Activated CD8-positive, alpha-beta memory T cell treated with anti-CD3 and anti-CD28 coated beads, Interleukin-2, amount 10 ng/mL, durations not matched to agents 7 days and 5 days (primary cell): ENCODE measurements at regions of chr12 and their contacts with region 1.

Region 1: DNA sequence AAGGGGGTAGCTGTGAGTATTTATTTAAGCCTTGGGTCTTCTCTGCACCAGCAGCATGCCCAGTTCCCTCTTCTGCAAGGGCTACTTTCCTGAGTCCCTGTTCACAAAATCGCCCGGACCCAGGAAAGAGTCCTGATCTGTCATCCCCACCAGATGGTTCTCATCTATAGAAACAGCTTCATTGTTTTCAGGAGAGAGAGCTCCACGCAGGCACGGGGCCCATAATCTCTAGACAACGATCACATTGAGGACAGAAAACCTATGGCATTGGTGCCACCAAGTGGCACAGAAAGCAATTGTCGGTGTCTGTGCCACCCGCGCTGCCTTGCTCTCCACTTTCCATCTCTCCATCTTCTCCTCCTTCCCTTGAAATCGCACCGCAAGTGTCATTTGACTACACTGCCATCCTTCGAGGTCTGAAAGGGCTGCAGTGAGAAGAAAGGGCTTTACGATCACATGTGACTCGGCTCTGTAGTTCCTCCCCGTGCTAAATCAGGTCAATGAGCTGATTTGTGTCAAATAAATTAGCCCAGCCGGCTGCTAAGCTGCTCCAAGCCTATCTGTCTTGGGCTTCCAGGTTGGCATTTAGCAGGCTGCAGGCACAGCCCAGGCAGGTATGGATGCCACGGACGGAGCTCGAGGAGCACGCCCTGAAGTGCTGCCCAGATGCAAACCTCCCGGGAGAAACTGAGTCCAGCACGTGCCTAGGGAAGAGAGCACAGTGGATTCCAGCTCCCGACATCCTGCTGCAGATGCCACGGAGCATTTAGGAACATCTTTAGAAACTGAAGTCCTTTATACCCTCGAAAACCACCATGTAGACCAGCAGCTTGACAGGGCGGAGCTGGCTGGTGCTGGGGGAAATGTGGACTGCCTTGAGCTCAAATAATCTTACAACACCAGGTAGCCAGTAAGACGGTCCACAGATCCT is 28.8 kb downstream of the SPRING1 start:
- DNase-seq: peak; percentile 62
- ATAC-seq: peak; percentile 88
- H3K4me3 Mint-ChIP-seq: peak overlapping the region; percentile 36
- H3K27ac Mint-ChIP-seq: no peak overlapping the region
- H3K4me1 Mint-ChIP-seq: peaks cover 7% of the 10 kb centered on the region
- H3K27me3 Mint-ChIP-seq: peaks cover 25% of the 10 kb centered on the region

Region 2: DNA sequence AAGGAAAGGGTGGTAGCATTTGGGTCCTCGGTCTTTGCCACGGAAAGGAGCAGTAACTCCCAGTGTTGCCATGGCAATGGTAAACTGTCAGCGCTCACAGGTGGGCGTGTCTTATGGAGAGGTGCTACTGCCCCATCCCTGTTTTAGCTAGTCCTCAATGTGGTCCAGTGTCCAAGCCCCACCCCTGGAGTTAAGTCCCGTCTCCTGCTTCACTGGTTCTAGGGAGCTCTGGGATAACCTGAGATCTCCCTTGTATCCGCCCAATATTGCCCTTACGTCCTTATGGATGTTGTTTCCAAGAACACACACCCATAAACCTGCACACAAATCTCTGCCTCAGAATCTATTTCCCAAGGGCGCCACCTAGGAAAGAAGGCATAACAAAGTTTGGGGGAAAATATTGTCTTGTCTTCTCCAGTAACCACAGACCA is 35.4 kb before region 1 on chr12:
- CTCF ChIA-PET with region 1: interaction called, 14 read pairs
- DNase-seq: peak; percentile 50
- ATAC-seq: peak; percentile 27
- H3K4me3 Mint-ChIP-seq: no peak overlapping the region
- H3K27ac Mint-ChIP-seq: peak overlapping the region; percentile 80
- H3K4me1 Mint-ChIP-seq: peaks cover 49% of the 10 kb centered on the region
- H3K27me3 Mint-ChIP-seq: peaks cover 2% of the 10 kb centered on the region

Region 3: DNA sequence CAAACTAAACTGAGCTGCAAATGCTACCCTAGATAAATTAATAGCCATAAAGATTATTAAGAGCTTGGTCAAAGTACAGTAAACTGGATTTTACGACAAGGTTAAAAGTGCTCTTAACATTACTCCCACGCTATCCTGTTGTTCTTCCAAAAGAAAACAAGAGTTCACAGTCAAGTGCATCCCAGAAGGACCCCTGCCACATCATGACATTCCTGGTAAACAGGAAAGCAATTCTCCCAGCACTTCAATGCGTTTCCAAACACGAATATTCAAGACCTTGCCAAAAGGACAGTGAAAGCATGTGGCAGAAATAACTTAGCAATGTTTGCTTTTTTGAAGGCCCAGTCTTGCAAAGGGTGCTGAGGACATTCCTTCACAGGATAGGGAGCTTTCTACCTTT is 17.6 kb after region 1 on chr12:
- CTCF ChIA-PET with region 1: interaction called, 12 read pairs
- DNase-seq: no peak
- ATAC-seq: no peak
- H3K4me3 Mint-ChIP-seq: no peak overlapping the region
- H3K27ac Mint-ChIP-seq: no peak overlapping the region
- H3K4me1 Mint-ChIP-seq: peaks cover 10% of the 10 kb centered on the region
- H3K27me3 Mint-ChIP-seq: no peaks in the 10 kb centered on the region

Region 4: DNA sequence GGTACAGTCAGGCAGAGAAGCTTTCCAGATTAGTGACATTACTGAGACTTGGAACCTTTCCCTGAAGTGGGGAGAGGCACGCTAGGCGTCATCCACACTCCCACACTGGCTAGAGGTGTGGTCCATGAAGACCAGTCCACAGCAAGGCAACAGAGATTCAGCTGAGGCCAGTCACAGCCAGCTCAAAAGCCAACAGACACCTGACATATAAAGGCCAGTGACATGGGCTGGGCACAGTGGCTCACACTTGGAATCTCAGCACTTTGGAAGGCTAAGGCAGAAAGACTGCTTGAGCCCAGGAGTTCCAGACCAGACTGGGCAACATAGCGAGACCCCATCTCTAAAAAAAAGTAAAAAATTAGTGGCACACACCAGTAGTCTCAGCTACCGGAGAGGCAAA is 161.2 kb after region 1 on chr12:
- CTCF ChIA-PET with region 1: no interaction called
- DNase-seq: no peak
- ATAC-seq: no peak
- H3K4me3 Mint-ChIP-seq: no peak overlapping the region
- H3K27ac Mint-ChIP-seq: no peak overlapping the region
- H3K4me1 Mint-ChIP-seq: no peaks in the 10 kb centered on the region
- H3K27me3 Mint-ChIP-seq: peaks cover 12% of the 10 kb centered on the region